Right ventricle myocardium inferior (tissue), 1 donor: ENCODE measurements at regions of chr19 and their contacts with region 1.

Region 1: DNA sequence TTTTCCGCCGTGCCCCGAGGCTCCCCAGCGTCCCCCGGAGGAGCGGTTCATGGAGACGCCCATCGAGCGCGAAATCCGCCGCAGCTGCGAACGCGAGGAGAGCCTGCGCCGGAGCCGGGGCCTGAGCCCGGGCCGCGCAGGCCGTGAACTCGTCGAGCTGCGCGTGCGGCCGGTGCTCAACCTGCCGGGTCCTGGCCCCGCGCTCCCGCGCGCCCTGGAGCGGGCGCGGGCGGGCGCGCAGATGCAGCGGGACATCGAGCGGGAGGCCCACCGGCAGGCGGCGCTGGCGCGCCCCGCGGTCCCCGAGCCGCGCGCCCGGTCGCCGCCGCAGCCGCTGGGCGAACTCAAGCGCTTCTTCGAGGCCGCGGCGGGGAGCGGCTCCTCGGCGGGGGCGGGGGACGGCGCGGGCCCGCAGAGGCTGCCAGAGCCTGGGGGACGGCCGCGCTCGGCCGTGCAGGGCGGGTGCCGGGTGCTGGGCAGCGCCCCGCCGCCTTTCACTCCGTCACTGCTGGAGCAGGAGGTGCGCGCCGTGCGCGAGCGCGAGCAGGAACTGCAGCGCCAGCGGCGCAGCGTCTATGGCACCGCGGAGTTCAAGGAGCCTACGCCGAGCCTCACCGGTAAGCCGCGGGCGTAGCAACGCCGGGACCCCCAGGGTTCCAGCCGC is 807 bp downstream of the MISP3 start:
- DNase-seq: peak; percentile 91
- ATAC-seq: peak; percentile 41

Region 2: GRCh38 chr19:13784731-13785452 is 288.5 kb before region 1 on chr19:
- intact Hi-C with region 1: loop called (anchors 10 kb)
- DNase-seq: peak; percentile 89
- ATAC-seq: peak; percentile 77

Region 3: DNA sequence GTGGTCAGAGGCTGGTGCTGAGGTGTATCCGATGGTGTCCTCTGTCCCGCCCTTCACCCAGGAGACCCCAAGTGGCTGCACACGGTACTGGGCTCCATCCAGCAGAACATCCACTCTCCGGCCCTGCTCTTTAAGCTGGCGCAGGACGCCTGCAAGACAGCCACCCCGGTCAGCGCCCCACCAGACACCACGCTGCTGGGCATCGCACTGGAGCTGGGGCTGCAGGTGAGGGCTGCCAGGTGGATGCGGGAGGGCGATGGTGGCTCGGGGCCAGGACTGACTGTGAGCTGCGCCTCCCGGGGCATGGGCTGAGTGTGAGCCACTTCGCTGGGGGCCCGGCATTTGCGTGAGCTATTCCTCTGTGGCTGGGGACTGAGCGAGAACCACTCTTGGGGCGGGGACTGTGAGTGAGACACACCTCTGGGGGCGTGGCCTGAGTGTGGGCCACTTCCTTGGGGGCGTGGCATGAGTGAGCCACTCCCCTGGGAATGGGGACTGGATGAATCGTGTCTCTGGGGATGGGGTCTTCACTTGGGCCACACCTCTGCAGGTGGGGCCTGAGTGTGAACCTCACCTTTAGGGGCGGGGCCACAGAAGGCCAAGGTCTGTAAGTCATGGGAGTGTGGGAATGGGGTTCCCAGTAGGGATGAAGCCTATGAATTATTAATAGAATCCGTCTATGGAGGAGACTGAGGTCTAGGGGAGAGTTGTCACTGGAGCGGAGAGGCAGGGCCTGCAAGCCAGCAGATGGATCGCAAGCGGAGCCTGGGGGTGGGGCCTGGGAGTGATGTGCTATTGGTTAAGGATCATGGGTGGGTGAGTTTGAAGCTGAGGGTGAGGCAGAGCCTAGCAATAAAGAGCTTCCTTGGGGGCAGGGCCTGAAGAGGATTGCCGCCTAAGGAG is 247.7 kb before region 1 on chr19:
- intact Hi-C with region 1: no loop called
- DNase-seq: peak; percentile 66
- ATAC-seq: no peak

Region 4: GRCh38 chr19:13880059-13881043 is 193.0 kb before region 1 on chr19:
- intact Hi-C with region 1: loop called (anchors 1 kb)
- DNase-seq: peak; percentile 99
- ATAC-seq: peak; percentile 97

Region 5: GRCh38 chr19:14006243-14006765 is 67.1 kb before region 1 on chr19 and contains the start of gene RFX1:
- intact Hi-C with region 1: loop called (anchors 2 kb)
- DNase-seq: peak; percentile 100
- ATAC-seq: peak; percentile 88
- total RNA-seq, gene RFX1: 15.4 TPM

Region 6: GRCh38 chr19:14091081-14091812 is 17.9 kb after region 1 on chr19:
- intact Hi-C with region 1: no loop called
- DNase-seq: peak; percentile 58
- ATAC-seq: peak; percentile 87

Region 7: GRCh38 chr19:14103310-14103709 is 29.9 kb after region 1 on chr19:
- intact Hi-C with region 1: no loop called
- DNase-seq: peak; percentile 65
- ATAC-seq: no peak